Activated T-helper 1 cell treated with anti-CD3 and anti-CD28 coated beads, Interleukin-12 subunit alpha, Interleukin-12 subunit beta, Interleukin-2, Interleukin-4 antibody, amounts not matched to agents 30 ng/mL and 10 ng/mL and 1 ng/mL, durations not matched to agents 14 hours and 24 hours and 36 hours (primary cell): ENCODE measurements at regions of chr11 and their contacts with region 1.

Region 1: DNA sequence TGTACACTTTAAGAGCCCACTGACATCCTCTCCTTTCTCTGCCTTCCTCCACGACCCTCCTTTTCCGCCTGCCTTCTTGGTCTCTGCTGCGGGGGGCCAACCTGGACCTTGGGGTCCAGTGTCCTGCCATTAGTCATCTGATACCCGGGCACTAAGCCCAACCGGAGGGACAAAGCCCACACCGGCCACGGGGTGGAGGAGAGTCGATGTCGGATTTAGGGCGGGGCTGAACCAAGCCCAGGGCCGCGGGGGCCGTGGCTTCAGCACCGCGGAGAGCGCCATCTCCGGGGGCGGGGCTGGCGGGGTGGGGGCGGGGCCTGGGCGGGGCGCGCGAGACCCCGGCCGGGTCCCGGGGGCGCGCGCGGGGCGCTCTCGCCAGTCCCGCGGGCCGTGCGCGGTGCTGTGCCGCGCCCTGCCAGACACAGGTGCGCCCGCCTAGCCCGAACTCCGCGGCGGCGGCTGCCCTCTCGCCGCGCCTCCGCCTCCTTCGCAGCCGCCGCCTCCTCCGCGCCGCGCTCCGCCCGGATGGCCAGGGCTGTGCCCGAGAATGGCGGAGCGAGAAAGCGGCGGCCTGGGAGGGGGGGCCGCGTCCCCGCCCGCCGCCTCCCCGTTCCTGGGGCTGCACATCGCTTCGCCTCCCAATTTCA is at the start of gene MAPK8IP1:
- DNase-seq: peak; percentile 34
- H3K4me3 Mint-ChIP-seq: peak within 1 kb of the TSS; percentile 71
- H3K27ac Mint-ChIP-seq: no peak within 1 kb of the TSS
- H3K4me1 Mint-ChIP-seq: peaks cover 6% of the 10 kb centered on the region
- H3K27me3 Mint-ChIP-seq: peaks cover 5% of the 10 kb centered on the region
- total RNA-seq, gene MAPK8IP1: 0.51 and 0.91 TPM in 2 replicates

Region 2: GRCh38 chr11:45745065-45745811 is 140.2 kb before region 1 on chr11:
- intact Hi-C with region 1: no loop called
- DNase-seq: no peak
- H3K4me3 Mint-ChIP-seq: no peak overlapping the region
- H3K27ac Mint-ChIP-seq: no peak overlapping the region
- H3K4me1 Mint-ChIP-seq: no peaks in the 10 kb centered on the region
- H3K27me3 Mint-ChIP-seq: peaks cover 13% of the 10 kb centered on the region

Region 3: GRCh38 chr11:45804761-45805304 is 80.6 kb before region 1 on chr11 and contains the start of gene SLC35C1:
- intact Hi-C with region 1: loop called (anchors 1 kb)
- DNase-seq: peak; percentile 96
- H3K4me3 Mint-ChIP-seq: peak within 1 kb of the TSS; percentile 97
- H3K27ac Mint-ChIP-seq: peak within 1 kb of the TSS; percentile 92
- H3K4me1 Mint-ChIP-seq: peaks cover 38% of the 10 kb centered on the region
- H3K27me3 Mint-ChIP-seq: no peaks in the 10 kb centered on the region
- total RNA-seq, gene SLC35C1: 16.3 and 18.2 TPM in 2 replicates

Region 4: GRCh38 chr11:45899448-45900173 is 14.2 kb after region 1 on chr11:
- intact Hi-C with region 1: loop called (anchors 1 kb)
- DNase-seq: peak; percentile 66
- H3K4me3 Mint-ChIP-seq: peak overlapping the region; percentile 42
- H3K27ac Mint-ChIP-seq: no peak overlapping the region
- H3K4me1 Mint-ChIP-seq: no peaks in the 10 kb centered on the region
- H3K27me3 Mint-ChIP-seq: peaks cover 30% of the 10 kb centered on the region